HepG2 (cell line): ENCODE measurements at regions of chr22 and their contacts with region 1.

Region 1: DNA sequence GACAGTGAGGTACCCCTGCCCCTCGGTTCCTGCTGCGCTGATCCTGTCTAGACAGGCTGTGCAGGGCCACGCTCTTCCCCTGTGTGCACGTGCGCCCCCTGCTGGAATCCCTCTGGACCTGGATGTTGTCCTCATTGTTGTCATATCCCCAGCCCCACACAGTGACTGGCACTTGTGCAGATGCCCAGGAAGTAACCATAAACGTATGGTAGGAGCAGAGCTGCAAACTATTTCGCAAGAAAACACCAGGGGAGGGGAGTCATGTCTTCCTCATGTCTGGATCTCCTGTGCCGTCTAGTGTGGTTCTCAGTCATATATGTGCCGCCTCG is 114.7 kb downstream of the CRYBB2 start:
- DNase-seq: peak; percentile 49
- ATAC-seq: peak; percentile 92
- H3K4me3 ChIP-seq: no peak overlapping the region
- H3K27ac ChIP-seq: no peak overlapping the region
- H3K4me1 ChIP-seq: peaks cover 18% of the 10 kb centered on the region
- H3K27me3 ChIP-seq: no peaks in the 10 kb centered on the region; a peak in 1 of 5 replicates
- CTCF ChIP-seq: peak; percentile 88
- EP300 ChIP-seq: no peak
- POLR2A ChIP-seq: no peak
- RAD21 ChIP-seq: peak; percentile 48; the same call in 1 of the 2 replicates

Region 2: DNA sequence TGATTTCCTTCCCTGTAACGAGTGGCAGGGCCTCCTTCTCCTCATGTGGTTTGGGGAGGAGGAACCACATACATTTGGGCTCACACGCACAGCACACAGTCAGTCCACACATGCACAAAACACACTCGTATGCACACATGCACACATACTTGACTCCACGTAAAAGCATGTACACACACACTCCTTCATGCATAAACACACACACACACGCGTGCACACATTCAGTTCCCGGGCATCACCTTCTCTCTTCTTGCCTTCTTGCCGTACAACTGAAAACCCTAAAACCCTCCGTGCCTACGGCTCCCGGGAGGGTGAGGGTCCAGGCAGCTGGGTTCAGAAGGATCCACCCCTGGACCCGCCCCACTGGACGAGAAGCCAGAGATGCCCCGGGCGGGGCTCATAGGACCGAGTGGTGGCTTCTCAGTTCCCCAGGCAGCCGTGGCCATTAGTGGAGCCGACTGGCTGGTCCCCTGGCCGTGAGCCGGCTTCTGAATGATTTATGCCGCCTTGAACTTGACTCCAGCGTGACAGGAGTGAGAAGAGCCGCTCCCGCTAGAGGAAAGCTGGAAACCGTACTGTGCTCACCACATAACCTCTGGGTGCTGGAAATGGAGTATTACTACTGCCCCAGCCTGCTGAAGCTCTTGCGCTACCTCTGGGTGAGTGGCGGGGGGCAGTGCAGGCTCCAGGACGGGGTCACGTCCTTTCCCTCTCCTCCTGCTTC is 264.2 kb before region 1 on chr22:
- CTCF ChIA-PET with region 1: no interaction called
- POLR2A ChIA-PET with region 1: no interaction called
- in situ Hi-C with region 1: loop called (anchors 10 kb)
- intact Hi-C with region 1: no loop called
- DNase-seq: no peak
- ATAC-seq: no peak
- H3K4me3 ChIP-seq: no peak overlapping the region
- H3K27ac ChIP-seq: no peak overlapping the region
- H3K4me1 ChIP-seq: no peaks in the 10 kb centered on the region
- H3K27me3 ChIP-seq: no peaks in the 10 kb centered on the region
- CTCF ChIP-seq: no peak
- EP300 ChIP-seq: no peak
- POLR2A ChIP-seq: no peak
- RAD21 ChIP-seq: no peak